Endothelial cell of umbilical vein (primary cell): ENCODE measurements at regions of chr3 and their contacts with region 1.

Region 1: DNA sequence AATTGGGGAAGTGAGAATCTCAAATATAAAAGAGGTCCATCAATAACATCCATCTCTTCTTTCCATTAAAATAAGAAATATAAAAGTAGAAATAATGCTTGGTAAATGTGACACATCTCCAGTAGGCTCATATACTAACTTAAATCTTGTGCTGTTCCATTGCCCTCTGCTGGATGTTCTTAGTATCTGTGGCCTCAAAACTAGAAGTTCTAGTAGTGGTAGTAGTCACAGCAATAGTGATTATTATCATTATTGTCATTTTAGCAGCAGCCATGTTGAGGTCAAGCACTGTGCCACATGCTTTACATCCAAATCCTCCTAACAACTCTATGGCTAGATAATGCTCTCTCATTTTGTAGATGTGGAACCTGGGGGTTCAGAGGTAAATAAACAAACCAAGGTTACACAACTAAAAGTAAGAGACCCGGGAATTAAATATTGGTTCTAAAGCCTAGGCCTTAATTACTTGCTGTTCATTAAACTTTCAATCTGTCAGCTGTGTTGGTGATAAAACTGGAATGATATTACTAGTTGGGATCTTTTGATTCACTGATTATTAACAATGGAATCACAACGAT is 20.2 kb upstream of the BTLA start:
- DNase-seq: peak; percentile 79
- H3K4me3 ChIP-seq: no peak overlapping the region
- H3K27ac ChIP-seq: no peak overlapping the region
- H3K4me1 ChIP-seq: no peaks in the 10 kb centered on the region
- H3K27me3 ChIP-seq: no peaks in the 10 kb centered on the region
- CTCF ChIP-seq: peak; percentile 45 to 52
- POLR2A ChIP-seq: no peak

Region 2: GRCh38 chr3:112136959-112137693 is 382.4 kb before region 1 on chr3:
- CTCF ChIA-PET with region 1: interaction called, 4 read pairs
- POLR2A ChIA-PET with region 1: no interaction called
- dilution Hi-C with region 1: no loop called
- intact Hi-C with region 1: loop called (anchors 1 kb)
- DNase-seq: peak; percentile 57
- H3K4me3 ChIP-seq: no peak overlapping the region
- H3K27ac ChIP-seq: no peak overlapping the region
- H3K4me1 ChIP-seq: no peaks in the 10 kb centered on the region
- H3K27me3 ChIP-seq: peaks cover 3 to 5% of the 10 kb centered on the region in 2 experiments
- CTCF ChIP-seq: peak; percentile 45 to 54
- POLR2A ChIP-seq: no peak

Region 3: GRCh38 chr3:112321867-112322649 is 197.5 kb before region 1 on chr3:
- CTCF ChIA-PET with region 1: interaction called, 27 read pairs
- POLR2A ChIA-PET with region 1: no interaction called
- dilution Hi-C with region 1: no loop called
- intact Hi-C with region 1: loop called (anchors 1 kb)
- DNase-seq: no peak
- H3K4me3 ChIP-seq: no peak overlapping the region
- H3K27ac ChIP-seq: no peak overlapping the region
- H3K4me1 ChIP-seq: no peaks in the 10 kb centered on the region
- H3K27me3 ChIP-seq: peaks cover 2 to 6% of the 10 kb centered on the region in 2 experiments
- CTCF ChIP-seq: no peak
- POLR2A ChIP-seq: no peak

Region 4: DNA sequence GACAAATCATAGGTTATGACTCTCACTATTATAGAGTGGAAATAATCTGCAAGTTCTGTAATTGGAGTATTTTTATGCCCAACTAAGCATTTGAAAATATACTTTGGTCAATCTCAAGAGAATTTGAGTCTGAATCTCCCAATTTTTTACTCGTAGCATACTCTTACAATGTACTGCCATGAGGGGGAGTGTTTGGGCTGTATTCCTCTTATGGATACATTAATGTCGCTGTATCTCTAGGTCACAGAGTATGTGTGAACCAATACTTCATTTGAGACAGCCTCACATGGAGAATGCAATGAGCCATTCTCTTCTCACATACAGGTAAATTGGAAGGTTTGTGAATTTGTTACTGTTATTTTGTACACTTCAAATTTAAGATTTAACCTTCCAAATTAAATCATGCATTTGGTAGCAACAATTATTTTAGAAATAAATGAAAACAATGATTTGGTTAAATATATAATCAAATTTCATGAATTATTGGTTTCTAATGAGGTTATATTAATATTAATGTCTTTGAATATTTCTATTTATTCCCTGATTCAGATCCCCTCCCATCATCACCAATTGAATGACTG is 192.1 kb before region 1 on chr3:
- CTCF ChIA-PET with region 1: interaction called, 27 read pairs
- POLR2A ChIA-PET with region 1: no interaction called
- dilution Hi-C with region 1: no loop called
- intact Hi-C with region 1: loop called (anchors 1 kb)
- DNase-seq: peak; percentile 79
- H3K4me3 ChIP-seq: no peak overlapping the region
- H3K27ac ChIP-seq: no peak overlapping the region
- H3K4me1 ChIP-seq: no peaks in the 10 kb centered on the region
- H3K27me3 ChIP-seq: peaks cover 0 to 2% of the 10 kb centered on the region in 2 experiments
- CTCF ChIP-seq: peak; percentile 34 to 53
- POLR2A ChIP-seq: no peak

Region 5: DNA sequence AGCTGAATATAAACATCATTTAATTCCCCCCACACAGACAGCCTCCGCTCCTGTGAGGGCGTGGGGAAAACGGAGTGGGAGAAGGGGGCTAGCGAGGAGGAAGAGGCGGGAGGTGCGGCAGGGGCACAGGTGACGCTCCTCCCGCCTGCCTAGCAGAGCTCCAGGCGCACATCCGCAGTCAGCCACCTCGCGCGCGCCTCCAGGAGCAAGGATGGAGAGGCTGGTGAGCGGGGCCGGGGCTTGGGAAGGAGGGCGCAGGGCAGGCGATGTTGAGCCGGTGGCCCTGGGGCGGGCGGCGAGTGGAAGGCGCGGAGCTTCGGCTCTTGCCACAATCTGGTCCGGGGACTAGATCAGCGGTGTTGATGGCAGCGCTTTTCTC is 186.5 kb before region 1 on chr3 and contains the start of gene CD200:
- CTCF ChIA-PET with region 1: interaction called, 22 read pairs
- POLR2A ChIA-PET with region 1: no interaction called
- dilution Hi-C with region 1: no loop called
- intact Hi-C with region 1: no loop called
- DNase-seq: peak; percentile 62
- H3K4me3 ChIP-seq: peak within 1 kb of the TSS; percentile 28 to 59 (median 56)
- H3K27ac ChIP-seq: no peak within 1 kb of the TSS
- H3K4me1 ChIP-seq: peaks cover 8% of the 10 kb centered on the region
- H3K27me3 ChIP-seq: peaks cover 0 to 6% of the 10 kb centered on the region in 2 experiments
- CTCF ChIP-seq: no peak
- POLR2A ChIP-seq: no peak
- total RNA-seq, gene CD200: 7.2 and 8.2 TPM in 2 replicates

Region 6: DNA sequence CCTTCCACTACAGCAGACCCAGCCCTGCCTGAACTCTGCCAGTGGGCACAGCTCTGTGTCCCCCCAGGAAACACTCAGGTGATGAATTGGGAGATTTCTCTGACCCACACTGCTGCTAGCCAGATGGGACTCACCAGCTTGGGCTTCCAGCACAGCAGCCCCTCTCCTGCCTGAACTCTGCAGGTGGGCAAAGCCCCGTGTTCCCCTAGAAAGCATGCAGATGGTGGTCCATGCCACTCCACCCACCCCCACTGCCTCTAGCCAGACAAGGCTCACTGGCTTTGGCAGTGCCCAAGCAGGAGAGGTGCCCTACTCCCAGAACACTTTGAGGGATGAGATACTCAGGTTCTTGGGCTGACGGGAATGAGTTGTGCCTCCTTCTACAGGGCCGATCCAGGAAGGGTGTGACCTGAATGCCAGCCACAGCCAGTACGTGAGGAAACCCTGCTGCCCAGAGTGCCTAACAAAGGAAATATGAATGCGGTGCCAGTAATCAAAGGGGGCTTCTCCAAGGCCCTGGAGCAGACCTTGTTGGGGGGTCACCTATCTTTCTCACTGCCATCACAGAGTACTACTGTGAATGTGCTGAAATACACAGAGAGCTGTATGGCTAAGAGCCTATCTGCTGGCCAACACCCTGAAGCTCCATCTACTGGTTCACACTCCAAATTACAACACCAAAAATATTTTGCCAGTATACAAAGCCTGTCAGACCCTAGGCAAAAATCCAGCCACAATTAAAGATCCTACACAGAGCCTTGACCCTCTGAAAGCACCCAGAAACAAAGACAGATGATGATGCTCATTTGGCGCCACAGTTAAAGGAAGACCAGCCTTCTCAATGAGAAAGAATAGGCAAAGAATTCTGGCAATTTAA is 82.1 kb before region 1 on chr3:
- CTCF ChIA-PET with region 1: interaction called, 7 read pairs
- POLR2A ChIA-PET with region 1: no interaction called
- dilution Hi-C with region 1: no loop called
- intact Hi-C with region 1: loop called (anchors 1 kb)
- DNase-seq: peak; percentile 33
- H3K4me3 ChIP-seq: no peak overlapping the region
- H3K27ac ChIP-seq: no peak overlapping the region
- H3K4me1 ChIP-seq: no peaks in the 10 kb centered on the region
- H3K27me3 ChIP-seq: no peaks in the 10 kb centered on the region
- CTCF ChIP-seq: peak; percentile 36 to 41
- POLR2A ChIP-seq: no peak

Region 7: GRCh38 chr3:112619295-112619694 is 99.8 kb after region 1 on chr3:
- CTCF ChIA-PET with region 1: no interaction called
- POLR2A ChIA-PET with region 1: no interaction called
- dilution Hi-C with region 1: no loop called
- intact Hi-C with region 1: no loop called
- DNase-seq: no peak
- H3K4me3 ChIP-seq: no peak overlapping the region
- H3K27ac ChIP-seq: peak overlapping the region; percentile 15
- H3K4me1 ChIP-seq: peaks cover 16% of the 10 kb centered on the region
- H3K27me3 ChIP-seq: no peaks in the 10 kb centered on the region
- CTCF ChIP-seq: no peak
- POLR2A ChIP-seq: no peak